ENCODE measurements at regions of chr19 and their contacts with region 1.

Region 1: GRCh38 chr19:16247353-16248182 is 49.9 kb downstream of the AP1M1 start:
- DNase-seq: peak; percentile 74 to 76
- ATAC-seq: peak; percentile 98 to 100
- H3K4me3 ChIP-seq: no peak overlapping the region
- H3K27ac ChIP-seq: no peak overlapping the region
- H3K4me1 ChIP-seq: no peaks in the 10 kb centered on the region
- CTCF ChIP-seq: peak; percentile 72
- EP300 ChIP-seq: no peak
- POLR2A ChIP-seq: no peak
- RAD21 ChIP-seq: peak; percentile 95 to 97

Region 2: GRCh38 chr19:16272945-16273344 is 25.4 kb after region 1 on chr19:
- CTCF ChIA-PET with region 1: interaction called, 11 read pairs
- POLR2A ChIA-PET with region 1: no interaction called
- DNase-seq: no peak
- ATAC-seq: no peak
- H3K4me3 ChIP-seq: no peak overlapping the region
- H3K27ac ChIP-seq: no peak overlapping the region
- H3K4me1 ChIP-seq: 0 out of 3 replicates have a peak, but pooled peaks cover 4% of the 10 kb centered on the region
- CTCF ChIP-seq: no peak
- EP300 ChIP-seq: no peak
- POLR2A ChIP-seq: no peak
- RAD21 ChIP-seq: no peak

Region 3: DNA sequence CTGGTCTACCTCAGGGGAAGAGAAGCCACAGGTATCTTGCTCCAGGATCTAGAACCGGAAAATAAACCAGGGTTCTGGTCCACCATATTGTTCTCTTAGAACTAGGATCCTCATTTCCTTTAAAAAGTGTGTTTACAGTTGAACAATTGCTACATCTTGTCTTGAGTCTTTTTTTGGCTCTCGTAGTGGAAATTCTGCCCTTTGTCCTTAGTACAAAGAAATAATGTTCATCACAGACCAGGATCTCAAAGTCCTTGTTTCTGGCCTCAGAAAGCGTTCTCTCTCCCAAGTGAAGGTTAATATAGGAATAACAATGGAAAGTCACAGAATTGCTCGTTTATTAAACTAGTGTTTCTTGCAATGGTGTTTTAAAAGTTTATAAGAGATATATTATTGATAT is 97.9 kb after region 1 on chr19:
- CTCF ChIA-PET with region 1: interaction called, 11 read pairs
- POLR2A ChIA-PET with region 1: interaction called, 3 read pairs
- DNase-seq: no peak
- ATAC-seq: no peak
- H3K4me3 ChIP-seq: no peak overlapping the region
- H3K27ac ChIP-seq: no peak overlapping the region
- H3K4me1 ChIP-seq: no peaks in the 10 kb centered on the region
- CTCF ChIP-seq: no peak
- EP300 ChIP-seq: no peak
- POLR2A ChIP-seq: no peak
- RAD21 ChIP-seq: no peak

Region 4: GRCh38 chr19:16371540-16371986 is 124.0 kb after region 1 on chr19:
- CTCF ChIA-PET with region 1: interaction called, 38 read pairs
- POLR2A ChIA-PET with region 1: no interaction called
- DNase-seq: no peak
- ATAC-seq: no peak
- H3K4me3 ChIP-seq: no peak overlapping the region
- H3K27ac ChIP-seq: no peak overlapping the region
- H3K4me1 ChIP-seq: peaks cover 9% of the 10 kb centered on the region
- CTCF ChIP-seq: no peak
- EP300 ChIP-seq: no peak
- POLR2A ChIP-seq: no peak
- RAD21 ChIP-seq: no peak

Region 5: DNA sequence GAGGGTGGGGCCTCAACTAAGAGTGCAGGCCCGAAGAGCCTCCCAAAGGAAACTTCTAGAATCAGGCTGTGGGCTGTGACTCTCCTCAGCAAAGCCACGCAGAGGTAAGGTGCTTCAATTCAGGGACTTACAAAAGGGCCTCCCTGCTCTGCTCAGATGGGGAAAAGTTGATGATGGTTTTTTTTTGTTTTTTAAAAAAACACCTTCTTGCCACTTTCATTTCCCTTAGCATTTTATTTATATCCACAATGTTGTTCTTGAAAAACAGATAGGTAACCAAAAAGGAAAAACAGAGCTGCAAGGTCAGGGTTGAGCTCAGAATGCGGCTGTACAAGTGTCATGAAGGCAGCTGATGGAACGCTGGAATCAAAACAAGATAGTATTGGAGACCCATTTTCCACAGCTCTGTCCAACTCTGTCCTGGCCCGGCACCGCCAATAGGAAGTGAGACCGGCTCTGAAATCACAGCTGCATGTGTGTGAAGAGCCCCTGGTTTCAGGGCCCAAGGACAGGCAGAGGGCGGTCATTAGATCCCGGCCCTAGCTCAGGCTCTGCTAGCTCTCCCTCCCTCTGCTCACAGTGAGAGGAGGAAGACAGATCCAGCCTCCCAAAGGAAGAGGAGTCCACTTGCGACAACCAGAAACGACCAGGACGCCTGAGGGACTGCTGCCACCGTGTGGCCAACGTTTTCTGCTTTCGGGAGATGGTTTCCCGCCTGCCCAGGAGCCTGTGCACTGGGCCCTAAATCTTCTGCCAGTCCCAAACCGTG is 135.4 kb after region 1 on chr19:
- CTCF ChIA-PET with region 1: interaction called, 92 read pairs
- POLR2A ChIA-PET with region 1: interaction called, 3 read pairs
- DNase-seq: peak; percentile 75 to 81
- ATAC-seq: peak; percentile 80 to 93
- H3K4me3 ChIP-seq: no peak overlapping the region
- H3K27ac ChIP-seq: peak overlapping the region in 1 of 2 experiments; percentile 52; a peak in 1 of 6 replicates
- H3K4me1 ChIP-seq: 0 out of 3 replicates have a peak, but pooled peaks cover 3% of the 10 kb centered on the region
- CTCF ChIP-seq: peak; percentile 67
- EP300 ChIP-seq: no peak
- POLR2A ChIP-seq: no peak
- RAD21 ChIP-seq: peak; percentile 87 to 92